Breast epithelium (tissue), 4 donors: ENCODE measurements at regions of chr1 and their contacts with region 1.

Region 1: DNA sequence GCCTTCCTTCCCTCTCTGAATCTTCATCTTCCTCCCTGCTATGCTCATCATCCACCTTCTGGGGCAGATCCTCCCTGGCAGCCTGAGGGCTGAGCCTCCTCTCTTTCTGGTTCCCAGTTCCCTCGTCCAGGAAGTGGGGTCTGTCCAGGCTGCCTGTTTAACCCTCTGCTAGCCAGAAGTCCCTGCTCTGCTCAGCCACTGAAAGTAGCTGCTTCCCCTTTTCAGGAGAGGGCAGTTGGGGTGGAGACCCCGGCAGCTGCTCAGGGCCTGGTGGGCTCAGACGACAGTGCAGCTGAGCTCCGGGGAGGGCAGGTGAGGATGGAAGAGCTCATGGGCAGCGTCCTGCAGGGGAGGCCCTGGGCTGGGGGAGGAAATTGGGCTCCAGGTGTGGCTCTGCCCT is 43.1 kb upstream of the ETV3 start:
- DNase-seq: no peak
- H3K4me3 ChIP-seq: no peak overlapping the region
- H3K27ac ChIP-seq: no peak overlapping the region
- H3K4me1 ChIP-seq: no peaks in the 10 kb centered on the region
- H3K27me3 ChIP-seq: peaks cover 0 to 4% of the 10 kb centered on the region in 2 donors
- CTCF ChIP-seq: no peak
- POLR2A ChIP-seq: no peak

Region 2: GRCh38 chr1:157008502-157008901 is 172.8 kb before region 1 on chr1:
- intact Hi-C with region 1: no loop called
- DNase-seq: no peak
- H3K4me3 ChIP-seq: no peak overlapping the region
- H3K27ac ChIP-seq: no peak overlapping the region
- H3K4me1 ChIP-seq: peaks cover 0 to 8% of the 10 kb centered on the region in 2 donors
- H3K27me3 ChIP-seq: no peaks in the 10 kb centered on the region
- CTCF ChIP-seq: no peak
- POLR2A ChIP-seq: no peak

Region 3: DNA sequence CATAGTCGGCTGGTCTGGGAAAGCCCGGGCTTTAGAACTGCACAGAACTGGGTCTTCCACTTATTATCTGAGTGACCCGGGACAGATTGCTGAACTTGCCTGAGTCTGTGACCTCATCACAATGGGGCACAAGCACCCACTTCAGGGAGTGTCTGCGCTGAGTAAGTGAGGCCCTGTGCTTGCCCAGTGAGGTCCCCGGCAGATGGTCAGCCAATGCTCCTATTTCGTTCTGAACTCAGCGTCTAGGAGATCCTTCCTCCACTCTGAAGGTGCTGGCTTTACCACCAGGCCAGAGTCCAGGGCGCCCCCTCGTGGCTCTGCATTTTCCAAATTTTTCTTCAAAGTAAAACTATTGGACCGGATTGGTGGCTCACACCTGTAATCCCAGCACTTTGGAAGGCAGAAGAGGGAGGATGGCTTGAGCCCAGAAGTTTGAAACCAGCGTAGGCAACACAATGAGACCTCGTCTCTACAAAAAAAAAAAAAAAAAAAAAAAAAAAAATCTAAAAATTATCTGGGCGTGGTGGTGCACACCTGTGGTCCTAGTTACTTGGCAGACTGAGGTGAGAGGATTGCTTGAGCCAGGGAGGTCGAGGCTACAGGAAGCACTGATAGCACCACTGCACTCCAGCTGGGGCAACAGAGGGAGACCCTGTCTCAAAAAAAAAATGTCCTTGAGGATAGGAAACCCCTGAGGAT is 309.4 kb after region 1 on chr1:
- intact Hi-C with region 1: loop called (anchors 10 kb)
- DNase-seq: peak; percentile 33 to 65
- H3K4me3 ChIP-seq: no peak overlapping the region
- H3K27ac ChIP-seq: no peak overlapping the region
- H3K4me1 ChIP-seq: no peaks in the 10 kb centered on the region
- H3K27me3 ChIP-seq: no peaks in the 10 kb centered on the region
- CTCF ChIP-seq: peak in 2 of 3 donors; percentile 33 to 36
- POLR2A ChIP-seq: no peak

Region 4: GRCh38 chr1:158534496-158534895 is 1353.2 kb after region 1 on chr1:
- intact Hi-C with region 1: no loop called
- DNase-seq: no peak
- H3K4me3 ChIP-seq: no peak overlapping the region
- H3K27ac ChIP-seq: no peak overlapping the region
- H3K4me1 ChIP-seq: no peaks in the 10 kb centered on the region
- H3K27me3 ChIP-seq: no peaks in the 10 kb centered on the region
- CTCF ChIP-seq: no peak
- POLR2A ChIP-seq: no peak